Activated CD8-positive, alpha-beta T cell treated with anti-CD3 and anti-CD28 coated beads for 36 hours (primary cell): ENCODE measurements at regions of chr7 and their contacts with region 1.

Region 1: GRCh38 chr7:143214789-143215679 is 6.8 kb upstream of the TAS2R40 start:
- DNase-seq: peak; percentile 69
- ATAC-seq: peak; percentile 98
- H3K4me3 Mint-ChIP-seq: no peak overlapping the region
- H3K27ac Mint-ChIP-seq: no peak overlapping the region
- H3K4me1 Mint-ChIP-seq: no peaks in the 10 kb centered on the region
- H3K27me3 Mint-ChIP-seq: no peaks in the 10 kb centered on the region
- CTCF ChIP-seq: peak; percentile 100

Region 2: GRCh38 chr7:142853739-142854371 is 361.2 kb before region 1 on chr7:
- CTCF ChIA-PET with region 1: interaction called, 14 read pairs
- POLR2A ChIA-PET with region 1: no interaction called
- intact Hi-C with region 1: no loop called
- DNase-seq: peak; percentile 77
- ATAC-seq: peak; percentile 81
- H3K4me3 Mint-ChIP-seq: peak overlapping the region; percentile 95
- H3K27ac Mint-ChIP-seq: peak overlapping the region; percentile 82
- H3K4me1 Mint-ChIP-seq: peaks cover 6% of the 10 kb centered on the region
- H3K27me3 Mint-ChIP-seq: no peaks in the 10 kb centered on the region
- CTCF ChIP-seq: peak; percentile 92

Region 3: GRCh38 chr7:142880876-142881505 is 334.0 kb before region 1 on chr7:
- CTCF ChIA-PET with region 1: interaction called, 24 read pairs
- POLR2A ChIA-PET with region 1: no interaction called
- intact Hi-C with region 1: loop called (anchors 10 kb)
- DNase-seq: peak; percentile 67
- ATAC-seq: peak; percentile 94
- H3K4me3 Mint-ChIP-seq: no peak overlapping the region
- H3K27ac Mint-ChIP-seq: no peak overlapping the region
- H3K4me1 Mint-ChIP-seq: no peaks in the 10 kb centered on the region
- H3K27me3 Mint-ChIP-seq: no peaks in the 10 kb centered on the region
- CTCF ChIP-seq: peak; percentile 90

Region 4: DNA sequence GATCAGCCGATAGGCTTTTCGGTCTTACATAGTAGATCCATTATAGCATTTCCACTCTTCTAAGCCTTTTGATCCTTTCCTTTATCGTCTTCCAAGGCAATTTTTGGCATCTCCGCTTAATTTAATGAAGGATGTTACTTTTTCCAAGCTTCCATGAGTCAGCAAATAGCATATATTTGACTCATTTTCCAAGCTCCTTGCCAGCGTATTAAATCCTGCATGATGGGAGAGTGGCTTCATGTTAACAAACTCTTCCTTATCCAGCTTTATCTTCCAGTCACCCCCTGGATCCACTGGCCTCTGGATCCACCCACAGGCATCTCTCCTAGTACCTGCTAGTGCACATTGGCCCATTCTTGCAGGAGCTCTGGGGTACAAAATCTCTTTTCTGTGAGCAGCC is 201.1 kb before region 1 on chr7:
- CTCF ChIA-PET with region 1: interaction called, 380 read pairs
- POLR2A ChIA-PET with region 1: no interaction called
- intact Hi-C with region 1: no loop called
- DNase-seq: no peak
- ATAC-seq: no peak
- H3K4me3 Mint-ChIP-seq: no peak overlapping the region
- H3K27ac Mint-ChIP-seq: no peak overlapping the region
- H3K4me1 Mint-ChIP-seq: peaks cover 2% of the 10 kb centered on the region
- H3K27me3 Mint-ChIP-seq: peaks cover 9% of the 10 kb centered on the region
- CTCF ChIP-seq: no peak

Region 5: DNA sequence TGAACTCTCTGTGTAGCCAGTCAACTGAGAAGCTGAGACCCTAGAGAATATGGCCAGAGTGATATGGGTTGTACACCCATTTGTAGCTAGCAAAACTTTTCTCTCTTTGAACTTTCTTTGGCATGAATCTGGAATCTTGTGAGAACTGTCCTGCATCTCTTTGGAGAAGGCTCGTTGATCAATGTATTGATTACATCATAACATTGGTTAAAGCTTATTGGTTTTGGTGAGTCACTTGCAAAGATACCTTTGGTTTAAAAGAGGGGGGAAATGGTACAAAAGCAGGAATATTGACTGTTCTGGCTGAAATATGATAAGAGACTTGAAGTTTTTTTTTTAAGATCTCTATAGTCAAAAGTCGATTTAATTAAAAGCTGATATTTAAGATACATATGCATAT is 95.9 kb before region 1 on chr7:
- CTCF ChIA-PET with region 1: interaction called, 10 read pairs
- POLR2A ChIA-PET with region 1: no interaction called
- intact Hi-C with region 1: no loop called
- DNase-seq: no peak
- ATAC-seq: no peak
- H3K4me3 Mint-ChIP-seq: no peak overlapping the region
- H3K27ac Mint-ChIP-seq: no peak overlapping the region
- H3K4me1 Mint-ChIP-seq: no peaks in the 10 kb centered on the region
- H3K27me3 Mint-ChIP-seq: peaks cover under 1% of the 10 kb centered on the region
- CTCF ChIP-seq: no peak

Region 6: DNA sequence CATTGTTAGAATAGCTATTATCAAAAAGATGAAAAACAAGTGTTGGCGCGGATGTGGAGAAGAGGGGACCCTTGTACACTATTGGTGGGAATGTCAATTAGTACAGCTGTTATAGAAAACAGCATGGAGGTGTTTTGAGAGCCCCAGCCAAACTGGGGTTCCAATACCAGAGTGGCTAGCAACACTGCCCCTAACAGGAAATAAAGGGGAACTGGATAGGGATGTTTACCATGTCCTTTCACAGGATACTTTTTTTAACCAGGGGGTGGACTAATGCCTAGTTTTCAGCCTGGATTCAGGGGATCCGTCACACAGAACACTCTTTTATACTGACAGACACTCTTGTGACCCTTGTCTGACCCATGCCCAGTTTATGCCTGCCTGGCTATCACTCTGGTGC is 41.3 kb after region 1 on chr7:
- CTCF ChIA-PET with region 1: no interaction called
- POLR2A ChIA-PET with region 1: no interaction called
- intact Hi-C with region 1: no loop called
- DNase-seq: no peak
- ATAC-seq: peak; percentile 38
- H3K4me3 Mint-ChIP-seq: no peak overlapping the region
- H3K27ac Mint-ChIP-seq: peak overlapping the region; percentile 72
- H3K4me1 Mint-ChIP-seq: peaks cover 56% of the 10 kb centered on the region
- H3K27me3 Mint-ChIP-seq: no peaks in the 10 kb centered on the region
- CTCF ChIP-seq: peak; percentile 16

Region 7: GRCh38 chr7:143299840-143300239 is 84.8 kb after region 1 on chr7:
- CTCF ChIA-PET with region 1: interaction called, 21 read pairs
- POLR2A ChIA-PET with region 1: no interaction called
- intact Hi-C with region 1: no loop called
- DNase-seq: peak; percentile 67
- ATAC-seq: peak; percentile 90
- H3K4me3 Mint-ChIP-seq: no peak overlapping the region
- H3K27ac Mint-ChIP-seq: no peak overlapping the region
- H3K4me1 Mint-ChIP-seq: peaks cover 51% of the 10 kb centered on the region
- H3K27me3 Mint-ChIP-seq: no peaks in the 10 kb centered on the region
- CTCF ChIP-seq: peak; percentile 52

Region 8: GRCh38 chr7:143401131-143401664 is 186.2 kb after region 1 on chr7:
- CTCF ChIA-PET with region 1: interaction called, 11 read pairs
- POLR2A ChIA-PET with region 1: no interaction called
- intact Hi-C with region 1: no loop called
- DNase-seq: no peak
- ATAC-seq: no peak
- H3K4me3 Mint-ChIP-seq: no peak overlapping the region
- H3K27ac Mint-ChIP-seq: no peak overlapping the region
- H3K4me1 Mint-ChIP-seq: peaks cover 17% of the 10 kb centered on the region
- H3K27me3 Mint-ChIP-seq: no peaks in the 10 kb centered on the region
- CTCF ChIP-seq: no peak